Activated T-helper 2 cell treated with anti-CD3 and anti-CD28 coated beads, Interferon-gamma antibody, Interleukin-2, Interleukin-4, amounts not matched to agents 10 μg/mL and 5 μg/mL and 100 μg/mL, durations not matched to agents 14 hours and 24 hours and 36 hours (primary cell): ENCODE measurements at regions of chr21 and their contacts with region 1.

Region 1: DNA sequence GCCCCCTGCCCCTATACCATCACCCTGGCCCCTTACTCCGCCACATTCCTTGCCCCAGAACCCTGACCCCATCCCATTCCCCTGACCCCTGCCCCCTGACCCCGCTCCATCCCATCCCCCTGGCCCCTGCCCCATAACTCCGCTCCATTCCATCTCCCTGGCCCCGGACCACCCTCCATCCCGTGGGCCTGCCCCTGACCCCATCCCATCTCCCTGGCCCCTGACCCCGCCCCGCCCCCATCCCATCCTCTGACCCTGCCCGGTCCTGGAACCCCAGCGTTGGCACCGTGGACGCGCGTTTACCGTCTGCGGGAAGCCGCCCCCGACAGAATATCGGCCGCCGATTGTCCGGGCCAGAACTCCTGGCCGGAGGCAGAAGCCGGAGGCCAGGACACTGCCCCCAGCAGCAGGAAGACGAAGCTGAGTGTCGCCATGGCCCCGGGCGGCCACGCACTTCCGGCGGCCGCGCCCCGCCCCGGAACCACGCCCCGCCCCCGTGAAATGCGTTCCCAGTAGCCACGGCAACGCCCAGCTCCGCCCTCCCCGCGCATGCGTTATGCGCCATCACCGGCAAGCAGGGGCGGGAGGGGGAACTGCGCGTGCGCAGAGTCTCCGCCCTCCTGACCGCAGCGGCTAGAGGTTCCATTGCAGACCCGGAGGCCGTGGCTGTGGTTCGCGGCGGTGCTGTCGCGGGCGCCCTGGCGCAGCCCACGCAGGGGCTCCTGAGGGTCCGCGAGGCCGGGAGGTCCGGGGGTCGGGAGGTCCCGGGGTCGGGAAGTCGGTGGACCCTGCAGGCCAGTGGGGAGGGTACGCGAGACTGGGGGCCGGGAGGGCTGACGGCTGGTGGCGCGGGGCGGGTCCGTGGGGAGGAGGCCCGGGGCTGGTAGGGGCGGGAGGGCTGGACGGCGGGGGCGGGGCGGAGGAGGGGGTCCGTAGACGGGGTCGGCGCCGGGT is at the start of gene POFUT2:
- DNase-seq: peak; percentile 97
- H3K4me3 Mint-ChIP-seq: peak within 1 kb of the TSS; percentile 80
- H3K27ac Mint-ChIP-seq: peak within 1 kb of the TSS; percentile 58
- H3K4me1 Mint-ChIP-seq: peaks cover 6% of the 10 kb centered on the region
- H3K27me3 Mint-ChIP-seq: no peaks in the 10 kb centered on the region
- total RNA-seq, gene POFUT2: 14.1 and 16.1 TPM in 2 replicates

Region 2: GRCh38 chr21:45087022-45087823 is 200.5 kb before region 1 on chr21:
- intact Hi-C with region 1: no loop called
- DNase-seq: no peak
- H3K4me3 Mint-ChIP-seq: peak overlapping the region; percentile 56
- H3K27ac Mint-ChIP-seq: peak overlapping the region; percentile 77
- H3K4me1 Mint-ChIP-seq: peaks cover 80% of the 10 kb centered on the region
- H3K27me3 Mint-ChIP-seq: no peaks in the 10 kb centered on the region

Region 3: DNA sequence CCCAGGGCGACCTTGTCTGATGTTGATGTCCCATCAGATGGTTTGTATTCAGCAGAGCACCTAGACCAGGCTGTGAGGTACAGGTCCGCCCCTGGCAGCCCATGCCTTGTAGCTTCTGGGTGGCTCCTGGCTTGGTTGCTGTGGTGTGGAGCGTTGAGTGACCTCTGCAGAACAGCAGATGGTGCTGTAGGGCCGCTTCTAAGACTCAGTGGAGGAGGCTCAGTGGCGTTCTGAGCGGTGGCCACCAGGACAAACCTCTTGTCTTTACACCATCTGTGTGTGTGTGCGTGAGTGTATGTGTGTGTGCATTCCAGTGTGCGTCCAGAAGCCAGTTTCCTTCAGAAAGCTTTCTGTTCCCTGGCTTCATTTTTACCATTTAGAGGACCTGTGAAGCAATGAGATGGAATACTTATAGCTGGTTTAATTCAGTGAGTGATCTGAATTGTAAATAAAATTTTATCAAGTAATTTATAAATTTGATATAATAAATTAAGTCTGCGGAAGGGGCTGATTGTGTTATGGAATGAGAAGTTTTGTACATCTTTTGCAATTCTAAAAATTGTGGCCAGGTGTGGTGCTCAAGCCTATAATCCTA is 147.3 kb before region 1 on chr21:
- intact Hi-C with region 1: loop called (anchors 5 kb)
- DNase-seq: peak; percentile 61
- H3K4me3 Mint-ChIP-seq: no peak overlapping the region
- H3K27ac Mint-ChIP-seq: no peak overlapping the region
- H3K4me1 Mint-ChIP-seq: peaks cover 8% of the 10 kb centered on the region
- H3K27me3 Mint-ChIP-seq: no peaks in the 10 kb centered on the region

Region 4: GRCh38 chr21:45152265-45152746 is 135.4 kb before region 1 on chr21:
- intact Hi-C with region 1: loop called (anchors 5 kb)
- DNase-seq: peak; percentile 74
- H3K4me3 Mint-ChIP-seq: peak overlapping the region; percentile 81
- H3K27ac Mint-ChIP-seq: peak overlapping the region; percentile 83
- H3K4me1 Mint-ChIP-seq: peaks cover 38% of the 10 kb centered on the region
- H3K27me3 Mint-ChIP-seq: no peaks in the 10 kb centered on the region

Region 5: DNA sequence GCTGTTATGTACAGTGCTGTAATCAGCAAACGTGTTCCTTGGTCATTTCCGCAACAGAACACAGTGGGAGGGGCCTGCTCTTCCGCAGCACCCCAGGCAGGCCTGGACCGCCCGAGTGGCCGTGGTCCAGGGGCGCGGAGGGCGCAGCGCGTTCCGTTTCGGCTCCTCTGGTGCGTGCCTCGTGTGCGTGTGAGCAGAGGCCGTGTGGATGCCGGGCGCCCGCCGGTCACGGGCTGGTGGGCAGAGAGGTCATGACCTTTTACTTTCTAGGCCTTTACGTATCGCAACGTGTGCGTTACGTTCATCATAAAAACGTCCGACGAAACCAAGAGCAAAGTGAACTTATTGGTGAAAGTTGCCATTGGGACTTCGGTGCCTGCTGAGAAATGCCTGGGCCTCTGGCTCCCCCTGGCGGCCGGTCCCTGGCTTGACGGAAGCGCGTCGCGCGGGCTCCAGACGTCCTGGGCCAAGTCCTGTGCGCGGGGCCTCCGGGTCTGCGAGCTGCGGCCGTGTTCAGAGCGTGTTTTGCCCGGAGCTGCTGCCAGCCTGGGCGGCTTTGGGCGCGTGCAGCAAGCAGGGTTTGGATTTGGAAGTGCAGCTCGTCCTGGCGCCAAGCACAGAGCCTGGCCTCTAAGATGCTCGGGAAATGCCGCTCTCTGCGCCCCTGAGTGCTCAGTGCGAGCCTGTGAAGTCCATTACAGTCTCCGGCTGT is 151.6 kb after region 1 on chr21:
- intact Hi-C with region 1: loop called (anchors 1 kb)
- DNase-seq: peak; percentile 77
- H3K4me3 Mint-ChIP-seq: no peak overlapping the region
- H3K27ac Mint-ChIP-seq: no peak overlapping the region
- H3K4me1 Mint-ChIP-seq: peaks cover 4% of the 10 kb centered on the region
- H3K27me3 Mint-ChIP-seq: no peaks in the 10 kb centered on the region